ENCODE measurements at regions of chr1 and their contacts with region 1.

Region 1: DNA sequence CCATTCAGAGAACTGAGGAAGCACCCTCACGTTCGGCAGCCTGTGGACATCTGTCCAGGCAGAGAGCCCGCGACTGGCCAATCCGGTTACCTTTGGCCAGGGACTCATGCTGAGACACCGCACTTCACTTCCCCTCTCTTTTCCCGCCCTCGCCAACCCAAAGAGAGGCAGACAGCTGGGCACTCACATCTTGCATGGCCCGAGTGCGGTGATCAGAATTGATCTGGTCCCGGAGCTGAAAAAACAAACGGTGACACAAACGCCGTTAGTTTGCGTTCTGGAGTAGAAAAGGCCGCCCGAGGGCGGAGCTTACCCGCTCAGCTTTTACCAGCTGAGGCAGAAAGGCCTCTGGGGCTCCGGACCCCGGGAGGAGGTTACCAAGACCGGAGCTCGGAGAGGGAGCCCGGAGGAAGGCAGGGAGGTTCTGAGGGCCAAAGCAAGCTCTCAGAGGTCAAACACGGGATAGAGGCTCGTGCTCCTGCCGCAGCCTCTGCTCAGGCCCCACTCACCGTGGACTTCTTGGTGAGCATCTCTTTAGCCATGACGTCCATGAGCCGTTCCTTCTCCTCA is 376 bp downstream of the SF3A3 start:
- DNase-seq: peak in 1 of 2 experiments; percentile 56
- H3K4me3 ChIP-seq: peak overlapping the region; percentile 89
- H3K27ac ChIP-seq: no peak overlapping the region
- H3K4me1 ChIP-seq: peaks cover 10% of the 10 kb centered on the region
- H3K27me3 ChIP-seq: no peaks in the 10 kb centered on the region
- CTCF ChIP-seq: no peak

Region 2: DNA sequence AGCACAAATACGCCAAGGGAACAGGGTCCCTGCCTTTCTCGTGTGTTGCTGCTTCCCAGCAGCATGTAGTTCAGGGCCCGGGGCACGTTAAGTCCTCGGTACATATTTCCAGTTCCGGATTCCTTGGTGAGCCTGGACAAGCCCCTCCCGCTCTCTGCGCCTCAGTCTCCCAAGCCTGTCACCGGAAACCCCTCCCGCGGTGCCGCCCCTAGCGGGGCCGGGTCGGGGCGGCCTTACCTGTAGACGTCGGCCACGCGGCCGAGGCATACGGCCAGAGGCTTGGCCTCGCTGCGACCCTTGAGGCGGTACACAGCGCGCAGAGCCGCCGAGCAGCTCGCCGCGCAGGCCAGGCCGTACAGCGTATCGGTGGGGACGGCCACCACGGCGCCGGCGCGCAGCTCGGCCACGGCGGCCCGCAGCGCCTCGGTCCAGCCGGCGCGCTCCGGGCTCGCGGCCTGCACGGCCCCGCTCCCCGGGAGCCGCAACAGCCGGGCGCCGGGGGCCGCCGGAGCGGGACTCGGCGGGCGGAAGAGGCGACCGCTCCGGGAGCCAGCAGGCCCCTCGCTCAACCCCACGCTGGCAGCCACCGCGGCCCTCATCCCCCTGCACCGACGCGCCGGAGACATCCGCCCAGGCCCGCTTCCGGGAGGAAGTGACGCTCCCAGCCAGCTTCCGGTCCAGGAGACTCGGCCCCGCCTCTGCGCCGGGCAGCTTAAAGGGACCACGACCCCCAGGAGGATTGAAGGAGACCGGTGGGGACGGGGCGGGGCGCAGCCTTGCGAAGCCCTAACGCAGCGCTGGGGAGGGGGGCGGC is 181.7 kb before region 1 on chr1 and contains the starts of genes C1orf122 and YRDC:
- CTCF ChIA-PET with region 1: no interaction called
- POLR2A ChIA-PET with region 1: no interaction called
- intact Hi-C with region 1: loop called (anchors 5 kb)
- DNase-seq: peak; percentile 86 to 95
- H3K4me3 ChIP-seq: peak within 1 kb of the TSS; percentile 71
- H3K27ac ChIP-seq: peak within 1 kb of the TSS; percentile 63
- H3K4me1 ChIP-seq: peaks cover 20% of the 10 kb centered on the region
- H3K27me3 ChIP-seq: no peaks in the 10 kb centered on the region
- CTCF ChIP-seq: no peak
- total RNA-seq, gene C1orf122: 51.8 and 75.8 TPM in 2 replicates
- total RNA-seq, gene YRDC: 13.2 and 16.0 TPM in 2 replicates

Region 3: DNA sequence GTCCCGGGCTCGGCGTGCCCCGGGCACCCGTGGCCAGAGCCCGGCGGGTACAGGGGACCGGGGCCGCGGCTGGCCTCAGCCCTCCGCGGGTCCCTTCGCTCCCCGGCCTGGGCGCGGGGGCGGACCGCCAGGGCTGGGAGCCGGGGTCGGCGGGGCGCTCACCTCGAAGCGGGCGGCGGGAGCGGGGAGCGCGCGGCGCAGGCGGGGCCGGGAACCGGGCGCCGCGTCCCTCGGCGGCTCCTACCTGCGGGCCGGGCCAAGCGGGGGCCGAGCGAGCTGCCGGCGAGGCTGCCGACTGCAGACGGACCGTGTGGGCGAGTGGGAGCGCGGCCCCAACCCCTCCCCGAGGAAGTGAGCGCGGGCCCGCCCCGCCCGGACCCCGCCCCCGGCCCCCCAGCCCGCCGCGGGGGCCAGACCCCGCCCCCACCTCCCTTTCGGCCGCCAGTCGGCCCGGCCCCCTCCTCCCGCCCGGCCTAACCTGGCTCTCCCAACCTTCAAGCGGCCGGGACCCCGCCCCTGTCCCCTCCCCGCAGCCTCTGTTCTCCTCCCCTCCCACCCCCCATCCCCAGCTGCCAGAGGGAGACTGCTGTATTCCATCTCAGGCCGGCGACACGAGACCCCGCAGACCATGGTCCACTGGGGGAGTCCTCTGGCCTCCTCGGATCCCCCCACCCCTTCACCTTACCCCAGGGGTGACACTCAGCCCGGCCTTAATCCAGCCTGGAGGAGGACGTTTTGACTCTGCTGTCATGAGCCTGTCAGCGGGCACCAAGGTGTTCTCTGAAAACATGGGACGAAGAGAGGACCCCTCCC is 16.0 kb after region 1 on chr1 and contains the start of gene FHL3:
- CTCF ChIA-PET with region 1: no interaction called
- POLR2A ChIA-PET with region 1: interaction called, 22 read pairs
- intact Hi-C with region 1: no loop called
- DNase-seq: peak in 1 of 2 experiments; percentile 76
- H3K4me3 ChIP-seq: peak within 1 kb of the TSS; percentile 68
- H3K27ac ChIP-seq: no peak within 1 kb of the TSS
- H3K4me1 ChIP-seq: peaks cover 24% of the 10 kb centered on the region
- H3K27me3 ChIP-seq: no peaks in the 10 kb centered on the region
- CTCF ChIP-seq: no peak
- total RNA-seq, gene FHL3: 26.2 and 29.8 TPM in 2 replicates

Region 4: DNA sequence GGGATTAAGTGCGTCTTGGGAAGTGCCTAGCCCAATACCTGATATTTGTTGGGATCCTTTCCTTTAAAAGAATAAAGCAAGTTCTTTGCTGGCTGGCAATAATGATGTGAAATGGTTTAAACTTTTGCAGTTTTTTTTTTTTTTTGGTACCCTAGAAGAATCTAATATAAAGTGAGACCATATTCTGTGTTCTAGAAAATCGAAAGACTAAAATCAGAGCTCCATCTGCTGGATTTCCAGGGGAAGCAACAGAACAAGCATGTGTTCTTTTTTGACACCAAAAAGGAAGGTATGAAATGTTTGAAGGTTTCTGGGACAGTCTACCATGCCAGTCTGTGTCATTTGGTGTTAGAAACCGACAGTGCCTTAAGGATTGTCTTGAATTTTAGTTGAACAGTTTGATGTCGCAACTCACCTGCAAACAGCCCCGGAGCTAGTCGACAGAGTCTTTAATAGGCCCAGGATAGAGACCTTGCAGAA is 29.5 kb after region 1 on chr1:
- CTCF ChIA-PET with region 1: interaction called, 5 read pairs
- POLR2A ChIA-PET with region 1: no interaction called
- intact Hi-C with region 1: loop called (anchors 1 kb)
- DNase-seq: no peak
- H3K4me3 ChIP-seq: no peak overlapping the region
- H3K27ac ChIP-seq: no peak overlapping the region
- H3K4me1 ChIP-seq: peaks cover 7% of the 10 kb centered on the region
- H3K27me3 ChIP-seq: no peaks in the 10 kb centered on the region
- CTCF ChIP-seq: peak; percentile 64

Region 5: DNA sequence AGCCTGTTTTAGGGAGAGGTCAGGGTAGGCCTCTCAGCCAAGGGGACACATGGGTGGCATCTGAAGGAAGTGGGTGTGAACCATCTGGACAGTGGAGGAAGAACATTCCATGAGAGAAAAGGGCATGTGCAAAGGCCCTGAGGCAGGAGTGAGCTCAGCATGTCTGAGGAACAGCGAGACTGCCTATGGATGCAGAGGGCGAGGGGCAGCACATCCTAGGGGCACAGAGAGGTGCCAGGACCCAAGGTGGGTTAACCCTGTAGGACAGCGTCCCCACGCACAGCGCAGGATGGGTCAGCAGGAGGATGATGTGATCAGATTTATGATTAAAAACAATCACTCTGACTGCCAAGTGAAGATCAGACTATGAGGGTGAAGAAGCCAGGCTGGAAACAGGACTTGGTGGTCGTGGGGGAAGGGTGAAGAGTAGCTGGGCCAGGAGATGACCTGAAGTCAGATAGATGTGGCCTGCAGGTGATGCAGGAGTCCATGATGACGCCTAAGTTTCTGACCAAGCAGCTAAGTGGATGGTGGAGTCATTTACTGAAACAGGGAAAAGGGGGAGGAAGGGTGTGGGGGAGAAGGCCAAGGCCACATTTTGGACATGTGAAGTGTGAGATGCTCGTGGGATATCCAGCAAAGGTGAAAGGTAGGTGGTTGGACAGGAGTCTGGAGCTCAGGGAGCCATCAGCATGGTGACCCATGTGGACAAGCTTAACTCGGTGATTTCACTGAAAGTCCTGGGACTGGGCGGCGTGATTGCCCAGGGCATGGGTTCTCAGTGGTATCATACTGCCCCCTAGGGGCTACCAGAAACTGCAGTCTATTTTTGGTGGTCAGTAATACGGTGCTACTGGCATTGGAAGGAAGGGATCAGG is 1549.4 kb after region 1 on chr1:
- CTCF ChIA-PET with region 1: interaction called, 14 read pairs
- POLR2A ChIA-PET with region 1: no interaction called
- intact Hi-C with region 1: no loop called
- DNase-seq: peak in 1 of 2 experiments; percentile 60
- H3K4me3 ChIP-seq: no peak overlapping the region
- H3K27ac ChIP-seq: no peak overlapping the region
- H3K4me1 ChIP-seq: no peaks in the 10 kb centered on the region
- H3K27me3 ChIP-seq: no peaks in the 10 kb centered on the region
- CTCF ChIP-seq: peak; percentile 86

Measured in PC-9 (cell line).